Psoas muscle (tissue), 8 donors: ENCODE measurements at regions of chr5 and their contacts with region 1.

Region 1: DNA sequence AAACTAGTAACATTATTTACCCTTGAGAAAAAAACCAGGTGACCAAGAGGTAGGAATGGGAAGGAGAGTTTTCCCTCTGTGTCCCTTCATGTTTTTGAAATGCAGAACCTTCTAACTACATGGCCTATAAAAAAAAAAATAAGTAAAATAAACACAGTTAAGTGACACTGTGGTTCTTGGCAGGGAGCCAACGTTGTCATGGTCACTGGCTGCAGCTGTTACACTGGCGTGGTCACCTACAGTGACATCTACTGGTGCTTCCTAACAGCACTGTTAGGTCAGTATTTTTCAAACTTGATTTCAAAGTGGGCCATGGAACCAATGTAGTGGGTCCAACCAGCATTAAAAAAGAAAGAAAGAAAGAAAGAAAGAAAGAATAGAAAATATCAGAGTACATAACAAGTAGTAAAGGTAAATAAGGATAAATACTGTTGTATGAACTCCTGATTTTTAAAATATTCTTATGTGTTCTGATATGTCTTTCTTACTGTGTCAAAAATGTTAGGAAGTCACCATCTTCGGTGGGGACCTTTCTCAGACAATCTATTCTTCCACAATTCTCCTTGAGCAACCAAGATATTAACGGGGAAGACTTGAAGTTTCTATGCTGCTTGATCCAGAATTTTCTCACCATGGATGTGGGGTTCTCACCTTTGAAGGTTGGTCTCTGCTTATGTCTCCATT is 59.1 kb upstream of the PJA2 start:
- DNase-seq: peak; percentile 92 to 96
- ATAC-seq: peak; percentile 92 to 100 (median 97)
- H3K4me3 ChIP-seq: no peak overlapping the region
- H3K27ac ChIP-seq: no peak overlapping the region
- H3K4me1 ChIP-seq: no peaks in the 10 kb centered on the region
- H3K27me3 ChIP-seq: no peaks in the 10 kb centered on the region
- CTCF ChIP-seq: peak; percentile 82

Region 2: DNA sequence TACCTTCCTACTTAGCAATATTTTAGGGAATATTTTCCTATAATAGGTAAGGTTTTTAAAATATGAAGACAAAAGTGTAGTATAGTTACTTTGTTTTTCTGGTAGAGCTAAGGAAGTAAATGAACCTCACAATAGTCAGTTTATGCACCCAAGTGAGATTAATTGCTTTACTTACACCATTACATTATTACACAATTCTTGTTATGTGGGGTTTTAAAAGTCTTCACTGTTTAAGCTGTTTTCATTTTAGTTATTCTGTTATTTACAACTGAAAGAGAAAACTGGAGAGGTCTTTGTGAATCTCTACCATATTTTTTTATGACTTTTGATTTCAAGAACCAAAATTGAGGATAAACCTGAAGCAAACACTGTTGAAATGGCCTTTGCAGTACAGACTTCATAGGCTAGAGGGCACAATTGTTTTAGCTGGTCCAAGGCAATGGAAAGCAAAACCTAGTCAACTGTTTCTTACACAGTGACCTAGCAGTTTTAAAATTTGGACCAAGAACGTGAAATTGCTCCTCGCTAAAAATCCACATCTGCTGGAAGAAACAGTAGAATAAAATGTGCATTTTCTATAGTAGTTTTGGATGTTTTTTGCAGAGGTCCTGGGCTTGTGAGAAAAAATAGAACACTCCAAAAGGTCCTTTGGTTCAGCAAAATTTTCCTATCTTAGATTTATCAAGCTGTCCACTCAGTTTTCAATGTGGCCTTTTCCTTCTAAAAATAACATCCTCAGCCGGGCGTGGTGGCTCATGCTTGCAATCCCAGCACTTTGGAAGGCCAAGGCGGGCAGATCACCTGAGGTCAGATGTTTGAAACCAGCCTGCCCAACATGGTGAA is 787.6 kb before region 1 on chr5:
- intact Hi-C with region 1: loop called in 1 of 2 experiments (anchors 10 kb)
- DNase-seq: no peak
- ATAC-seq: peak; percentile 82 to 99 (median 92)
- H3K4me3 ChIP-seq: peak overlapping the region; percentile 50
- H3K27ac ChIP-seq: peak overlapping the region; percentile 53
- H3K4me1 ChIP-seq: peaks cover 3% of the 10 kb centered on the region
- H3K27me3 ChIP-seq: no peaks in the 10 kb centered on the region
- CTCF ChIP-seq: peak; percentile 74

Region 3: DNA sequence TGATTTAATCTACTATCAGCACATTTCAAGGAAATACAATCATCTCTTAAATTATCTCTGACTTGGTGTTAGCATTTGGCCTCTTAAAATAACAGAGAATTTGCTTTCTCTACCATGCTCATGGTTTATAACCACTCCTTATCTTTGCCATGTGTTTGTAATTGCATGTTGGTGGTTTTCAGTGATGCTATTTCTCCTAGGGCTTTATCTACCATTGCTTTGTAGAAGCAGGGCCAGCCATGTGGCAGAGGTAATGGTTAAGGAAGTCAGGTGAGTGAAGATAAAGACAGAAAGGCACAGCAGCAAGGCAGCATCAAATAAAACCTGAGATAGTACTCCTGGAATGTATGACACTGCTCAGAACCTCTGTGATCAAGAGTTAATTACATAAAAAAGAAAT is 514.9 kb before region 1 on chr5:
- intact Hi-C with region 1: no loop called
- DNase-seq: no peak
- ATAC-seq: no peak
- H3K4me3 ChIP-seq: no peak overlapping the region
- H3K27ac ChIP-seq: no peak overlapping the region
- H3K4me1 ChIP-seq: no peaks in the 10 kb centered on the region
- H3K27me3 ChIP-seq: no peaks in the 10 kb centered on the region
- CTCF ChIP-seq: no peak

Region 4: GRCh38 chr5:109304309-109304708 is 164.6 kb before region 1 on chr5:
- intact Hi-C with region 1: loop called (anchors 5 to 10 kb)
- DNase-seq: no peak
- ATAC-seq: peak in 3 of 4 donors; percentile 11 to 50 (median 40)
- H3K4me3 ChIP-seq: no peak overlapping the region
- H3K27ac ChIP-seq: no peak overlapping the region
- H3K4me1 ChIP-seq: no peaks in the 10 kb centered on the region
- H3K27me3 ChIP-seq: no peaks in the 10 kb centered on the region
- CTCF ChIP-seq: no peak

Region 5: DNA sequence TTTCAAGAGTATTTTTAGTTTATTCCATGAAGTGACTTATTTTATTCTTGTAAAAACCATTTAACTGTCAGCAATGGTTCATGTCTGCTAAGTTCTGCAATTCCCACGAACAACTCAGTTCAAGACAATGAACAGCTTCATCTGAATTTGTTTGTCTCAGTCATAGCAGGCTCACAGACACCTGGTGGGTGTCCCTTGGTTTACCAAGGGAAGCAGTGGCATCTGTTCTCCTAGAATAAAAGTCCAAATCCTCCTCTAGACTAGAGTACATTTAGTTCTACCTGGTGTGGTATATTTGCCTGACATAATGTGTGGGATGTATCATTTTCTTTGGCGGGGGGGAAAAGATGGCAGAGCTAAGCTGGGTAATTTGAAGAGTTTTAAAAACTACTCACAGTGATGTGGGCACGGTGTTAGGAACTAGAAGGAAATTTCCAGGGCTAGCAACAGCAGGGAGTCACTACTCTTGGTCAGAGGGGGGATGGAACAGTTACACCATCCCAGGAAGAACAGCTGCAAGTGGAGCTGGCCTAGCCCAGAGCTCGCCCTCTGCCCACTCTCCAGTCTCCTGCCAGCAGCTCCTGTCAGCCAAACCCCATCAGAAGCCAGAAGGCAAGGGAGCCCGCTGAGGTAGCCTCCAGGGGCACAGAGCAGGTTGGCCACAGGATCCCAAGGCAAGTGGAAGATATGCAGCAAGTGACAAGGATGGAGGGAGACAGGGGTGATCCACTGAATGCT is 159.4 kb before region 1 on chr5:
- intact Hi-C with region 1: loop called (anchors 5 to 10 kb)
- DNase-seq: peak; percentile 33 to 63
- ATAC-seq: peak; percentile 93 to 98 (median 97)
- H3K4me3 ChIP-seq: no peak overlapping the region
- H3K27ac ChIP-seq: peak overlapping the region; percentile 47
- H3K4me1 ChIP-seq: no peaks in the 10 kb centered on the region
- H3K27me3 ChIP-seq: no peaks in the 10 kb centered on the region
- CTCF ChIP-seq: no peak

Region 6: GRCh38 chr5:109416882-109417281 is 52.0 kb before region 1 on chr5:
- intact Hi-C with region 1: loop called in 1 of 2 experiments (anchors 5 kb)
- DNase-seq: no peak
- ATAC-seq: no peak
- H3K4me3 ChIP-seq: no peak overlapping the region
- H3K27ac ChIP-seq: no peak overlapping the region
- H3K4me1 ChIP-seq: peaks cover under 1% of the 10 kb centered on the region
- H3K27me3 ChIP-seq: no peaks in the 10 kb centered on the region
- CTCF ChIP-seq: no peak

Region 7: DNA sequence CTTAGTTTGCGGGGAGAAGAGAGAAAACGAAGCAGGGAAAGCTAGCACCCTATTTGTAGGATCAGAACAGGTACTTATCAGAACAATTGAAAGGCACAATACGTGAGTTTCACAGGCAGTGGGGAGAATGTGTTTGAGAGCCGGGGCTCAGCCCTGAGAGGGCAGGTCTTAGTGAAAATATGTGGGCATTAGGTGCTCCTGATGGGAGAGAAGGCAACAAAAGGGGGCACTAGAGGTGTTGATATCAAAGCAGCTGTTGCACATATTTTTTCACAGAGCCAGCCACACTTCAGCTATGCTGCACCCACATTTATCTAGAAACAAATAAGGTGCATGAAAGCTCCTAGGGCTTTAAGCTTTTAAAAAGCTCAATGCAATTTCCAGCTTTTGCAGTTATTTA is 121.1 kb after region 1 on chr5:
- intact Hi-C with region 1: no loop called
- DNase-seq: no peak
- ATAC-seq: no peak
- H3K4me3 ChIP-seq: no peak overlapping the region
- H3K27ac ChIP-seq: no peak overlapping the region
- H3K4me1 ChIP-seq: no peaks in the 10 kb centered on the region
- H3K27me3 ChIP-seq: no peaks in the 10 kb centered on the region
- CTCF ChIP-seq: no peak

Region 8: DNA sequence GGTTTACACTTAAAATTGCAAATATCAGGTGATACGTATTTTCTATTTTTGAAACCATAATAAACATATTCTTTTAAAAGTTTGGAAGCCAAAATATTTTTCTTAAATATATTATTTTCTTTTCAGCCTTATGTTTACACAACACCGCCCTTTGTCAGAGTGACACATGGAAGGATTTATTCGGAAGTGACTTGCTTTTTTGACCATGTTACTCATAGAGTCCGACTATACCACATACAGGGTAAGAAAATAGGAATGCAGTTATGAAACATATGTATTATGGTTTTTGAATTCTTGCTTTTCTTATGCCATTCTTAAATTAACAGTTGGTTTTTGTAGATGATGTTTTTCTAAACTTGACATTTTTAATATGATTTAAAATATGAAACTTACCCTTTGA is 354.7 kb after region 1 on chr5:
- intact Hi-C with region 1: no loop called
- DNase-seq: no peak
- ATAC-seq: no peak
- H3K4me3 ChIP-seq: no peak overlapping the region
- H3K27ac ChIP-seq: no peak overlapping the region
- H3K4me1 ChIP-seq: no peaks in the 10 kb centered on the region
- H3K27me3 ChIP-seq: no peaks in the 10 kb centered on the region
- CTCF ChIP-seq: no peak